ENCODE measurements at regions of chr15 and their contacts with region 1.

Region 1: GRCh38 chr15:44243829-44244228 is 44.7 kb upstream of the GOLM2 start:
- DNase-seq: no peak
- ATAC-seq: peak; percentile 77
- H3K4me3 ChIP-seq: no peak overlapping the region
- H3K27ac ChIP-seq: no peak overlapping the region
- H3K4me1 ChIP-seq: peaks cover 4% of the 10 kb centered on the region; the same call in 1 of the 2 replicates
- H3K27me3 ChIP-seq: no peaks in the 10 kb centered on the region
- CTCF ChIP-seq: peak; percentile 77

Region 2: DNA sequence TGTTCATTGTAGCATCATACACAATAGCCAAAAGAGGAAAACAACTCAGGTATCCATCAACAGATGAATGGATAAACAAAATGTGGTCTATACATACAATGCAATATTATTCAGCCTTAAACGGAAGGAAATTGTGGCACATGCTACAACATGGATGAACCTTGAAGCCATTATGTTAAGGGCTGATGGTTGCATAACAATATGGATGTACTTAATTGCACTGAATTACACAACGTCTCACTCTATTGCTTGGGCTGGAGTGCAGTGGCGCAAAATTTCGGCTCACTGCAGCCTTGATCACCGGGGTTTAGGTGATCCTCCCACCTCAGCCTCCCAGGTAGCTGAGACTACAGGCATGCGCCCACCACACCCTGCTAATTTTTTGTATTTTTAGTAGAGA is 1117.5 kb before region 1 on chr15:
- CTCF ChIA-PET with region 1: no interaction called
- POLR2A ChIA-PET with region 1: interaction called, 18 read pairs
- in situ Hi-C with region 1: no loop called
- intact Hi-C with region 1: no loop called
- DNase-seq: no peak
- ATAC-seq: no peak
- H3K4me3 ChIP-seq: no peak overlapping the region
- H3K27ac ChIP-seq: no peak overlapping the region
- H3K4me1 ChIP-seq: no peaks in the 10 kb centered on the region
- H3K27me3 ChIP-seq: no peaks in the 10 kb centered on the region; the same call in 1 of the 2 replicates
- CTCF ChIP-seq: no peak

Region 3: DNA sequence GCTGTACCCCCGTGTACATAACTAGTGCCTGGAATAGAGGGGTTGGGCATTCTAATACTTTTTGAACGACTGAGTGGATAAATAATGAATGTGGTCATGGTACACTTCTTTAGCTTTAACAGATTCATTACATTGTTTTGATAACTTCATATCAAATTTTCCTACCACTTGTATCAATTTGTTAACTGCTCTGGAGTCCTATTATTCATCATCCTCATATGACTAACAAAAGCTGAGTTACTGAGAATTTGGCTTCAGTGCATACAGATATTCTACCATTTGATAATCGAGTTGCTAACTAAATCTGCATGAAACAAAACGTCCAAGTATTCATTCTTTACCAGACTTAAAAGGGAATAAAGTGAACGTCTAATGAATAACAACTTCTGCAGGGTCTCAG is 80.5 kb before region 1 on chr15:
- CTCF ChIA-PET with region 1: no interaction called
- POLR2A ChIA-PET with region 1: interaction called, 10 read pairs
- in situ Hi-C with region 1: no loop called
- intact Hi-C with region 1: no loop called
- DNase-seq: no peak
- ATAC-seq: no peak
- H3K4me3 ChIP-seq: no peak overlapping the region
- H3K27ac ChIP-seq: no peak overlapping the region; the same call in 1 of the 2 replicates
- H3K4me1 ChIP-seq: peaks cover 12% of the 10 kb centered on the region
- H3K27me3 ChIP-seq: no peaks in the 10 kb centered on the region
- CTCF ChIP-seq: no peak

Region 4: DNA sequence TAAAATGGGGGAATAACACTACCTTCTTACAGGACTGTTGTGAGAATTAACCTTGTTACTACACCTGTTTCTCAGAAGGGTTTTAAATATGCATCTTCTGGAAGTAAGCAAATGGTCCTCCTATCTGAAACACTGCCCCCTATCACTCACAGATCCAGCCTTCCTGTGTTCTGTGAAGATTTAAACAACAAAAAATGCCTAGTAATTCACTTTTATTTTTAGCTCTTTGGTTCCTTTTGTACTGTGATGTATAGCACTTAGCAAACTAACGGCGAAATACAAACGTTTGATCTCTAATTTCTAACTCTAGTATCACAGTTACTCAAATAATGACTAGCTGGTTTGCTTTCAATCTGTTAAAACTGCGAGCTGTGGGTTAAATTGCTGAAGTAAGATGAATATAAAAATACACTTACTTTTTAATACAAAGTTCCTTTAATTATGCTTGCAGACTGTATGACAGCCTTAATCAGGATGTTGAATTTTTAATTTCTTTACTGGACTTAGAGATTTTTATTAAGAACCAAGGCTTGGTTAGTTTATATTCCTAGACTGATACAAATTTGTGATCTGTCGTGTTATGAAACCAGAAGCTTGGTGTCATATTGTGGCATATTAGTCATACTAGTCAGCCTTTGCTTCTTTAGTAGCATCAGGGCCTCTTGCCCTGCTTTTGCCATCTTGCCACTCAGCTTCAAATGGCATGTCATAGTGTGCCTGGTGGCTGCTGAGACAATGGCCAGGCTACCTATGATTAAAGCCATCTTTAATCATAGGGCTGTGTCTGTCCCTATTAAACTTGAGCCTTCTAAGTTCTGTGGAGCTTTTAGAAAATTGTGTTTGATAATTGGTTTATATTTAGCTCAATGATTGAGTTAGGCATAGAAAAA is 302.3 kb after region 1 on chr15:
- CTCF ChIA-PET with region 1: no interaction called
- POLR2A ChIA-PET with region 1: interaction called, 10 read pairs
- in situ Hi-C with region 1: no loop called
- intact Hi-C with region 1: no loop called
- DNase-seq: no peak
- ATAC-seq: no peak
- H3K4me3 ChIP-seq: no peak overlapping the region
- H3K27ac ChIP-seq: no peak overlapping the region
- H3K4me1 ChIP-seq: 0 out of 2 replicates have a peak, but pooled peaks cover 6% of the 10 kb centered on the region
- H3K27me3 ChIP-seq: no peaks in the 10 kb centered on the region
- CTCF ChIP-seq: peak; percentile 59; the same call in 1 of the 2 replicates